PC-3 (cell line): ENCODE measurements at regions of chrX and their contacts with region 1.

Region 1: DNA sequence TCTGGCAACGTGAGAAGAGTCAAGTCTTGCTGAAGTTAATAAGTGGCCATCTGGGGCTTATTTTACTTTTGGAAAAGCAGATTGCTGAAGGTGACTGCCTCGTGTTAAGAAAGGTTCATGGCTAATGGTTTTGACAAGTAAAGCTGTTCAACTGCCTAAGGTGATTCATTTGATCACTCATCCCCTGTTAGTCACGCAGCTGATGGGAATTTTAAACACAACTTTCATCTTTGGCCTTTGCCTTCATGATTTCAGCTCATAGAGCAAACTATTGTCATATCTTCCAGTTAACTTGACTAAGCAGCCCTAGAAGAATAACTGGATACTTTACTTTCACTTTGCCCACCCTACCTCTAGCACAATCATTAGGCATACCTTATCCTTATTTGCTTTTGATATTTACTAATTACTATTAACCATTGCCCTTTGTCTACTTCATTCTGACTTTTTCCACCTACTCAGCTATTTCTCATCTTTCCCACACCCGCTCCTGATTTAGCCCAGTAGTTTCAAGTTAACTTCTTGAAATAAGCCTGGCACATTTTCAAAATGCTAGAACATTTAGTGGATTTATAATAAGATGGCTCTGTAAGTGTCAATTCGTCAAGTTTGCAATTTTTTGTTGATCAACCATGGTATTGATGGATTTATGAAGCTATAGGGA is 170.6 kb upstream of the S100G start:
- DNase-seq: peak; percentile 92
- ATAC-seq: peak; percentile 80
- H3K4me3 ChIP-seq: peak overlapping the region; percentile 50; the same call in 1 of the 2 replicates
- H3K27ac ChIP-seq: peak overlapping the region; percentile 100
- H3K4me1 ChIP-seq: peaks cover 33% of the 10 kb centered on the region
- H3K27me3 ChIP-seq: no peaks in the 10 kb centered on the region
- CTCF ChIP-seq: no peak

Region 2: DNA sequence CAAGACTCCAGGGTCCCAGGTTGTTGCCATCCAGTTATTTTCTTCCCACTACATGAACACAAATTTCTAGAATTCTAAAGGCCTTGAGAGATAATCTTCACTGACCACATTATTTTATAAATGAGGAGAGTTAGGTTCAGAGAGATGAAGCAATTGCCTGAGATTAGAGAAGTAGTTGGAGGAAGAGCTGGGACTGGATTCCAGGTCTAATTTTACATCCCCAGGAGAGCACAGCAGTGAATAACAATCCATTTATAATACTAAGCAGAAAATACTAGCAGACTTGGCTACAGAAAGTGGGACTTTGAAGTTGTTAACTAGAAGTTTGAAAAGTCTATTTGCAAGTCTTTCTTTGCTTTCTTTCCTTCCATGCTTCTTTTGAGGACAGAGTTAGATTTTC is 60.7 kb before region 1 on chrX:
- CTCF ChIA-PET with region 1: no interaction called
- POLR2A ChIA-PET with region 1: no interaction called
- intact Hi-C with region 1: no loop called
- DNase-seq: no peak
- ATAC-seq: no peak
- H3K4me3 ChIP-seq: no peak overlapping the region
- H3K27ac ChIP-seq: no peak overlapping the region
- H3K4me1 ChIP-seq: no peaks in the 10 kb centered on the region
- H3K27me3 ChIP-seq: no peaks in the 10 kb centered on the region
- CTCF ChIP-seq: no peak

Region 3: DNA sequence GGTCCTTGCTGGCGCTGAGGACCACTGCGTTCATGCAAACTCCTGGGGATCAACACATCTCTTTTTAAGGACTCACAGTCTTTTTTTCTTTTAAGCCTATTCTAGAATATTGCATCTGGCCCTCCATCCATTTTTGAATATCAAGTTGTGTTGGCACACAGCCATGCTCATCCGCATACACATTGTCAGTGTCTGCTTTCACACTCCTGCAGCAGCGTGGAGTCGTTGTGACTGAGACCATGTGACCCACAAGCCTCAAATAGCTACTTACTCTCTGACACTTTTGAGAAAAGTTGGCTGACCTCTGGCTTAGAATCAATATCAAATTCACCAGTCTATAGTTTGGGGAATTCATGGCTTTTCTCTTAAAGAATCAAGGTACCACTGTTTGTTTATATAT is 21.1 kb before region 1 on chrX:
- CTCF ChIA-PET with region 1: no interaction called
- POLR2A ChIA-PET with region 1: no interaction called
- intact Hi-C with region 1: no loop called
- DNase-seq: no peak
- ATAC-seq: no peak
- H3K4me3 ChIP-seq: no peak overlapping the region
- H3K27ac ChIP-seq: no peak overlapping the region
- H3K4me1 ChIP-seq: no peaks in the 10 kb centered on the region
- H3K27me3 ChIP-seq: no peaks in the 10 kb centered on the region
- CTCF ChIP-seq: no peak

Region 4: DNA sequence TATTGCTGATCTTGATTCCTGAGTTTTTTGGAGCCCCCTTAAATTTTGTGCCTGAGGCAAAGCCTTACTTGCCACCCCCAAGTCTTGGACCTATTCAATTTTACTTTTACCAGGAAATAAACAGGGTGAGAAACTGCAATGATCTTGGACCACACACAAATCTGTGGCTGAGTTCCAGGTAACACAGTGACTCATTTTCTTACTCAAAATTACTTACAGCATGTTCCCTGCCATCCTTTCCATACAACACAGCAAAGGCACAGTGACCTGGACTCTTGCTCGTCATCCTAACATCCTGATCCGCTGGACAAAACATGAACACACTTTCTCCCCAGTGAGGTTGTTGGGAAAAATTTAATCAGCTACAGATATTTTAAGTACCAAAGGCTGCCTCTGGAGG is 109.9 kb after region 1 on chrX:
- CTCF ChIA-PET with region 1: no interaction called
- POLR2A ChIA-PET with region 1: no interaction called
- intact Hi-C with region 1: loop called (anchors 10 kb)
- DNase-seq: peak; percentile 79
- ATAC-seq: peak; percentile 83
- H3K4me3 ChIP-seq: no peak overlapping the region
- H3K27ac ChIP-seq: peak overlapping the region; percentile 91
- H3K4me1 ChIP-seq: peaks cover 40% of the 10 kb centered on the region
- H3K27me3 ChIP-seq: no peaks in the 10 kb centered on the region
- CTCF ChIP-seq: no peak

Region 5: GRCh38 chrX:16610121-16610621 is 130.8 kb after region 1 on chrX:
- CTCF ChIA-PET with region 1: no interaction called
- POLR2A ChIA-PET with region 1: no interaction called
- intact Hi-C with region 1: no loop called
- DNase-seq: peak; percentile 84
- ATAC-seq: peak; percentile 94
- H3K4me3 ChIP-seq: no peak overlapping the region
- H3K27ac ChIP-seq: peak overlapping the region; percentile 97
- H3K4me1 ChIP-seq: peaks cover 25% of the 10 kb centered on the region
- H3K27me3 ChIP-seq: no peaks in the 10 kb centered on the region
- CTCF ChIP-seq: no peak

Region 6: DNA sequence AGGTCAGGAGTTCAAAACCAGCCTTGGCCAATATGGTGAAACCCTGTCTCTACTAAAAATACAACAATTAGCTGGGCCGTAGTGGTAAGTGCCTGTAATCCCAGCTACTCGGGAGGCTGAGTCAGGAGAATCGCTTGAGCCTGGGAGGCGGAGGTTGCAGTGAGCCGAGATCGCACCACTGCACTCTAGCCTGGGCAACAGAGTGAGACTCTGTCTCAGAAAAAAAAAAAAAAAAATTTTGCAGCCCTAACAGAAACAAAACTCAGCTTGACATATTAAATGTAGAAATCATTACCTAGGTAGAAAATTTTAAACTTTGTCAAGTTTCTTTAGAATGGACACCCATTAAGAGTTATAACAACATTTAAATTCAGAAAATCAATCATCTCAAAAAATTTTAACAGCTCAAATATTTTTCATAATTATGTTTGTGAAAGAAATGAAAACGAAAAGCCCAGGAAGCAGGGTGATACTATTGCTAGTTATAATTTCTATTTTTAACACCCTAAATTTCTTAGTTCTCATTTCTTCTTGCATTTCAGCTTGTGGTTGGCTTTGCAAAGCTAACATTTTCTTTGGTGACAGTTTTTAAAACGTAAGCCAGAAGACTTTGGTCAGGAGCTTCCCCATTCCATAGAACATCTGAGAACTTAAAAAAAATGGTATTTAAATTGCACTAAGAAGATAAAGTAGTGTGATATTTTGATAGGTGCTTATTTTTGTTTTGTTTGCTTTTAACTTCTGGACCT is 424.1 kb after region 1 on chrX:
- CTCF ChIA-PET with region 1: no interaction called
- POLR2A ChIA-PET with region 1: no interaction called
- intact Hi-C with region 1: no loop called
- DNase-seq: no peak
- ATAC-seq: no peak
- H3K4me3 ChIP-seq: no peak overlapping the region
- H3K27ac ChIP-seq: no peak overlapping the region
- H3K4me1 ChIP-seq: no peaks in the 10 kb centered on the region
- H3K27me3 ChIP-seq: no peaks in the 10 kb centered on the region
- CTCF ChIP-seq: no peak